MCF 10A (cell line): ENCODE measurements at regions of chr12 and their contacts with region 1.

Region 1: DNA sequence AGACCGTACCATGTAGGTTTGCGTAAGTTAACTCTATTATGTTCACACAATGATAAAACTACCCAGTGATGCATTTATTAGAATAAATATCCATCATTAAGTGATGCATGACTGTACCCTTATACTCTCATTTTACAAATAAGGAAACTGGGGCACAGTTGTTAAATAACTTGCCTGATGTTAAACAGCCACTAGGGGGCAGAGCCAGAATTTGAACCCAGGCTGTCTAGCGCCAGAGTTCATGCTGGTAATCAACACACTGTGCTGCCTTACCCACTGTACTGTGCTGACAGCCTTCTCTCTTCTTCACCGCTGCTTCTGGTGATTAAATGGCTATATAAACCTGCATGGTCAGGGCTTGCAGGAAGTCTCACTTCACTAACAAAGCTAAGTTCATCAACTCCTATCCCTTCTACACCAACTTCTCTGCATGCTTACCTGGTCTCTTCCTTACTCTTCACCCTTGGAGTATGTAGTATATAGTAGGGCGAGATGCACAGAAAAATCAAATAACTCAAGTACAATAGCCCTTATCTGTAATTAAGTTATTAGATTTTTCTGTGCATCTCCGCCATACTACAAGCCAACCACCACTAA is 43.6 kb upstream of the APPL2 start:
- DNase-seq: peak; percentile 47
- H3K4me3 Mint-ChIP-seq: no peak overlapping the region
- H3K27ac Mint-ChIP-seq: no peak overlapping the region
- H3K4me1 Mint-ChIP-seq: peaks cover 6% of the 10 kb centered on the region
- H3K27me3 Mint-ChIP-seq: peaks cover 13% of the 10 kb centered on the region
- CTCF ChIP-seq: peak; percentile 43

Region 2: GRCh38 chr12:104840262-104840661 is 439.3 kb before region 1 on chr12:
- CTCF ChIA-PET with region 1: no interaction called
- POLR2A ChIA-PET with region 1: no interaction called
- intact Hi-C with region 1: loop called (anchors 5 kb)
- DNase-seq: no peak
- H3K4me3 Mint-ChIP-seq: no peak overlapping the region
- H3K27ac Mint-ChIP-seq: no peak overlapping the region
- H3K4me1 Mint-ChIP-seq: no peaks in the 10 kb centered on the region
- H3K27me3 Mint-ChIP-seq: no peaks in the 10 kb centered on the region
- CTCF ChIP-seq: no peak